ENCODE measurements at regions of chr7 and their contacts with region 1.

Region 1: DNA sequence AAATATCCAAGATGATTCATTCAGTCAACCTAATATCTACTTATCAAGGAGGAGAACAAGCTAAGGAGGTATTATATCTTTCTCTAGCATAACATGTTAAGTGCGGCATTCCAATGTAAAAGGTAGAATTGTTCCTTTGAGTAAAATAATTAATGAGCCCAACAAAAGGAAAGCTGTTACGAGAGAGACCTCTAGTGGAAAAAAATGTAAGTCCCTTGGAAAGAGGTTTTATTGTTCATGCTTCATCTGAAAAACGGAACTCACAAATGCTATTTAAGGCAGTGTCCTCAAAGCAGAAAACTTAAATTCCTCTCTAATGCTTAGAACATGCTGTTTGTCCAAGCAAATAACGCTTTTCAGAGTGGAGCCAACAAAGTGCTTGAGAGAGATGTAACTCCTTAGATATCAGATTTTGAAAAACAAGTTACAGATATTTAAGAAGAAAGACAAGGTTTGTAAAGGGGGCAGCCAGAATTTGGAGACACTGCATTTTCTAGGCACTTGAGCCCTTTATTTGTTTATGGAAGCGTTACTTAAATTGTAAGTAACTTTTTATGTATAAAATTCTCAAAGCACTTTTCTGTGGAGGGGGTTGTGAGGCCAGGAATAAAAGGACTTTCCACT is 119.9 kb downstream of the TFEC start:
- DNase-seq: peak in 4 of 5 donors; percentile 10 to 13 (median 12)
- H3K4me3 ChIP-seq: no peak overlapping the region
- H3K4me3 Mint-ChIP-seq: no peak overlapping the region
- H3K27ac ChIP-seq: no peak overlapping the region
- H3K27ac Mint-ChIP-seq: no peak overlapping the region
- H3K4me1 ChIP-seq: no peaks in the 10 kb centered on the region
- H3K4me1 Mint-ChIP-seq: no peaks in the 10 kb centered on the region
- H3K27me3 ChIP-seq: no peaks in the 10 kb centered on the region
- H3K27me3 Mint-ChIP-seq: peaks cover 2 to 3% of the 10 kb centered on the region in 2 donors

Region 2: GRCh38 chr7:114081606-114082425 is 1828.8 kb before region 1 on chr7:
- CTCF ChIA-PET with region 1: no interaction called
- POLR2A ChIA-PET with region 1: no interaction called
- intact Hi-C with region 1: loop called (anchors 1 kb)
- DNase-seq: peak in 3 of 5 donors; percentile 34 to 37 (median 35)
- H3K4me3 ChIP-seq: no peak overlapping the region
- H3K4me3 Mint-ChIP-seq: peak overlapping the region in 1 of 8 donors; percentile 5
- H3K27ac ChIP-seq: no peak overlapping the region
- H3K27ac Mint-ChIP-seq: no peak overlapping the region
- H3K4me1 ChIP-seq: peaks cover 42% of the 10 kb centered on the region
- H3K4me1 Mint-ChIP-seq: peaks cover 23 to 40% (median 32%) of the 10 kb centered on the region in 4 donors
- H3K27me3 ChIP-seq: peaks cover 34% of the 10 kb centered on the region
- H3K27me3 Mint-ChIP-seq: peaks cover 51 to 53% of the 10 kb centered on the region in 2 donors